Activated CD4-positive, alpha-beta memory T cell treated with anti-CD3 and anti-CD28 coated beads for 36 hours (primary cell): ENCODE measurements at regions of chr17 and their contacts with region 1.

Region 1: DNA sequence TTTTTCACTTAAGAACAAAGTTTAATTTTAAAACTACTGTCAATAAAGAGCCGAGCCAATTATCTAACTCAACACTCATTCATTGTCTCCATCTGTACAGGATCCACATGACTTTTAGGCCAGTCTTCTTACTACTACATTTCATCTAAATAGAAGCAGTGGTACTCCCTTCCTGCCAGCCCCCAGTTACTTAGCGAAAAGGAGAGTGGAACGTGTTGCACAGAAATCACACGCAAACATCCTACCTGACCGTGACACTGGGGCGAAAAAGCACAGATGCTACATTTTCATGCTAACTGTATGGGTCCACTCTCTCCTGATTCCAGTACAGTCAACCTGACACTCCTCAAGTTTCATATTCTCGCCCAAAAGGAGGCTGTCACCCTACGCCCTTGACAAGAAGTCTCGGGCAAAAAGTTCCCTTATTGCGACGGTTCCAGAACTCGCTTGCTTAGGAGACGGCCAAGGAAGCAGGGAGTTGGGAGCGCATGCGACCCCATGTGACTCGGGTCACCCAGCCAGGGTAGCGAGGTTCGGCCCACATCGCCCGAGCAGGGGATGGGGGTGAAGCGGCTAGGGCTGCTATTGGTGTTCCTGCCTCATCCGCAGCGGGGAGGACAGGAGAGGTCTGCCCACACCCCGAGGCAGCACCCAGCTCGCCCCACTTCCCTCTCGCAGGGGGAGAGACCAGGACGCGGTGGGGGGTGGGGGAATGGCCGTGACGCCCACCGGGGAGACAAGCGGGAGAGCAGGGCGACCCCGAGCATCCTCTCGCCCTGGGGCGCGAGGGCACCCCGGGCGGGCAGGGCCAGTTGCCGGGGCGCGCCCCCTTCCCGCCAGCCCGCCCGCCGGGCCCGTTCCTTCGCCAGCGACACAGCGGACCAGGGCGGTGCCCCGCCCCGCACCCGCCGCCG is 935 bp downstream of the GNA13 start:
- DNase-seq: peak; percentile 65
- H3K4me3 Mint-ChIP-seq: peak overlapping the region; percentile 98
- H3K27ac Mint-ChIP-seq: peak overlapping the region; percentile 99
- H3K4me1 Mint-ChIP-seq: peaks cover 45% of the 10 kb centered on the region
- H3K27me3 Mint-ChIP-seq: no peaks in the 10 kb centered on the region

Region 2: DNA sequence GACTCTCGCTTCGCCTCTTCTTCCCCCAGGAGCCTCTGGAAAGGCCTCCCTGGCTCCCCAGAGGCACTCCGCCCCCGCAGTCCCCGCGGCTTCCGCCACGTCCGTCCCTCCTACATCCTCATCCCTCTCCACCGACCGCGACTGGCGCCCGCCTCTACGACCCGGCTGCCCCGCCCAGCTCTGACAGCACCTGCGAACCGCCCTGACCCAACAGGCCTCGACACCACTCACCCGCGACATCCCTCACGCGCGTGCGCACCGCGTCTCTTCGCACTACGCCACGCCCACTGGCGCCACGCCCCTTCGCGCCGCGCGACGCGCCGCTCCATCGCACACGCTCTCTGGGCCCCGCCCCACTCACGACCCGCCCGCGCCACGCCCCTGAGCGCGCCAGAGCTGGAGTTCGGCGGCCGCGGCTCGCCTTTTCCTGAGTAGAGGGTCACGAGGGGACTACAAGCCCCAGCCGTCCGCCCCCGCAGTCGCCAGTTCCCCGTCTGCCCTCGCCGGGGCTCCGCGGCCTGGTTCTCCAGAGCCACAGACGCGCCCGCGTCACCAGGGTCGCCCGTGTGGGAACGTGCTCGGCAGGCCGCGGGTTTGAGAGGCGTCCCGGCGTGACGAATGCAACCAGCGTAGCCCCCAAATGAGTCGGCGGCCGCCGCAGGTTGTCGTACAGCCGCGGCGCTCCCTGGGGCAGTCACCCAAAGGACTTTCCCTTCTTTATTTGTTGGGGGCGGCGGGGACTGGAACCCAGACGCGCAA is 80.1 kb before region 1 on chr17:
- CTCF ChIA-PET with region 1: interaction called, 6 read pairs
- POLR2A ChIA-PET with region 1: interaction called, 10 read pairs
- intact Hi-C with region 1: loop called (anchors 1 kb)
- DNase-seq: peak; percentile 97
- H3K4me3 Mint-ChIP-seq: peak overlapping the region; percentile 82
- H3K27ac Mint-ChIP-seq: peak overlapping the region; percentile 100
- H3K4me1 Mint-ChIP-seq: peaks cover 55% of the 10 kb centered on the region
- H3K27me3 Mint-ChIP-seq: no peaks in the 10 kb centered on the region

Region 3: GRCh38 chr17:64984851-64985521 is 70.6 kb before region 1 on chr17:
- CTCF ChIA-PET with region 1: no interaction called
- POLR2A ChIA-PET with region 1: interaction called, 9 read pairs
- intact Hi-C with region 1: loop called (anchors 1 kb)
- DNase-seq: peak; percentile 70
- H3K4me3 Mint-ChIP-seq: peak overlapping the region; percentile 75
- H3K27ac Mint-ChIP-seq: peak overlapping the region; percentile 97
- H3K4me1 Mint-ChIP-seq: peaks cover 48% of the 10 kb centered on the region
- H3K27me3 Mint-ChIP-seq: no peaks in the 10 kb centered on the region

Region 4: GRCh38 chr17:65027305-65027704 is 28.3 kb before region 1 on chr17:
- CTCF ChIA-PET with region 1: interaction called, 3 read pairs
- POLR2A ChIA-PET with region 1: no interaction called
- intact Hi-C with region 1: loop called (anchors 1 kb)
- DNase-seq: peak; percentile 75
- H3K4me3 Mint-ChIP-seq: peak overlapping the region; percentile 62
- H3K27ac Mint-ChIP-seq: peak overlapping the region; percentile 96
- H3K4me1 Mint-ChIP-seq: peaks cover 83% of the 10 kb centered on the region
- H3K27me3 Mint-ChIP-seq: no peaks in the 10 kb centered on the region

Region 5: GRCh38 chr17:65039336-65039988 is 16.1 kb before region 1 on chr17:
- CTCF ChIA-PET with region 1: interaction called, 7 read pairs
- POLR2A ChIA-PET with region 1: interaction called, 5 read pairs
- intact Hi-C with region 1: loop called (anchors 1 kb)
- DNase-seq: peak; percentile 65
- H3K4me3 Mint-ChIP-seq: peak overlapping the region; percentile 60
- H3K27ac Mint-ChIP-seq: peak overlapping the region; percentile 87
- H3K4me1 Mint-ChIP-seq: peaks cover 81% of the 10 kb centered on the region
- H3K27me3 Mint-ChIP-seq: no peaks in the 10 kb centered on the region